CD8-positive, alpha-beta memory T cell (primary cell): ENCODE measurements at regions of chr15 and their contacts with region 1.

Region 1: DNA sequence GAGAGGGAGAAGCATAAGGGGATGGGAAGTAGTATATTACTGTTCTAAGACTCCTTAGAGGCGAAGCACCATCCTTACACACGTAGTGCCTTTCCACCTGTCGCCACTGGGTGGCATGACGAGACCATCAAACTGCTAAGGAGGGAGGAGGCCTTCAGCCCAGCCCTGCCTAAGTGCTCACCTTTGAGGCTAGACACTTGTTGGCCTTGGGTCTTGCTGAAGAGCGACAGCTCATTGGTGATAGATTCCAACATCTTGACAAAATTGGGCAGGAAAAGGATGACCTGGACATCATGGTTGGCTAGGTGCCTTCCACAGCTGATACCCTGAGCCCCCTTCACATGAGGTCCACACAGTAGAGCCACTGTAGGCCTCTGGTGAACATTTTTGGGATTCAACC is 19.6 kb downstream of the CLK3 start:
- DNase-seq: peak; percentile 48 to 81 (median 56)
- H3K4me3 ChIP-seq: no peak overlapping the region
- H3K4me3 Mint-ChIP-seq: no peak overlapping the region
- H3K27ac ChIP-seq: no peak overlapping the region
- H3K27ac Mint-ChIP-seq: peak overlapping the region in 6 of 8 donors; percentile 4 to 77 (median 50)
- H3K4me1 ChIP-seq: no peaks in the 10 kb centered on the region
- H3K4me1 Mint-ChIP-seq: peaks cover 0 to 2% (median 2%) of the 10 kb centered on the region in 3 donors
- H3K27me3 ChIP-seq: no peaks in the 10 kb centered on the region
- H3K27me3 Mint-ChIP-seq: no peaks in the 10 kb centered on the region

Region 2: DNA sequence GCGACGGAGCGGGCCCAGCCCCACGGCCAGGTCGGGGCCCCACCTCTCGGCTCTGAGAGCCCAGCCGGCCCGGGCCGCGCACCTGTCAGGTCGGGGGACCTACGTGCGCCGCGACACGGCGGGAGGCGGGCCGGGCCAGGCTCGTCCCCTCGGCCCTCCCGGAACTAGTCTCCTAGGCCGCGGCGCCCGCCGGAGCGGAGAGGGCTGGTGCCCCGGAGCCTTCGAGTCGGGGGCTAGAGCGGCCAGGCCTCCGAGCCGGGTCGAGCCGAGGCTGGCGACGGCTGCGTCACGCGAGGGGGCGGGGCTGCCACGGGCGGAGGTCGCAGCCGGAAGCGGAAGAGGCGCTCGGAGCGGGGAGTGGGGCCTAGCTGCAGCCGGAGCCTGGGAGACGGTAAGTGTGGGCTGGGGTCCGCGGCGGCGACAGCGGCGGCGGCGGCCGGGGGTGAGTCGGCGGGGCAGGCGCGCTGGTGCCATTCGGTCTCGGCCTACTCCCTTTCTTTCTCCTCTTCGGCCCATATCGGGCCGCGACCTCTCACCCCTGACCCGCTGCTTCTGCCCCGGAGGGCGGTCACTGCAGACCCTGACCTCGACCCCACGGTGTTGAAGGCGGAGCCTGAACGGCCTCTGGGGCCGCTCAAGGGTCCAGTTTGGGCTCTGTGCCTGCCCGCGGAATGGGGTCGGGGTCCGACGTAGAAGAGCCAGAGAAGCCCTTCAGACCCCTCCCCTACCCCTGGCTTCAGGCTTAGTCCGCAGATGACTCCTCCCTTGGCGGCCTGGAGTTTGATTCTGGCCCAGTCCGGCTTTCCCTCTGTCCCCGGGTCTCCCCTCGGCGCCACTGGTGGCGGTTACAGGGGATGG is 19.5 kb before region 1 on chr15 and contains the start of gene CLK3:
- CTCF ChIA-PET with region 1: interaction called, 35 read pairs
- POLR2A ChIA-PET with region 1: interaction called, 3 read pairs
- DNase-seq: peak; percentile 91 to 96 (median 95)
- H3K4me3 ChIP-seq: peak within 1 kb of the TSS; percentile 95
- H3K4me3 Mint-ChIP-seq: peak within 1 kb of the TSS; percentile 93 to 98 (median 94)
- H3K27ac ChIP-seq: peak within 1 kb of the TSS; percentile 97
- H3K27ac Mint-ChIP-seq: peak within 1 kb of the TSS; percentile 97 to 99 (median 98)
- H3K4me1 ChIP-seq: peaks cover 35% of the 10 kb centered on the region
- H3K4me1 Mint-ChIP-seq: peaks cover 38 to 53% (median 41%) of the 10 kb centered on the region in 3 donors
- H3K27me3 ChIP-seq: no peaks in the 10 kb centered on the region
- H3K27me3 Mint-ChIP-seq: no peaks in the 10 kb centered on the region
- total RNA-seq, gene CLK3: 96.8 to 101 TPM

Region 3: GRCh38 chr15:74620636-74621545 is 14.3 kb before region 1 on chr15:
- CTCF ChIA-PET with region 1: interaction called, 35 read pairs
- POLR2A ChIA-PET with region 1: interaction called, 3 read pairs
- DNase-seq: peak; percentile 55 to 79 (median 64)
- H3K4me3 ChIP-seq: no peak overlapping the region
- H3K4me3 Mint-ChIP-seq: peak overlapping the region in 3 of 7 donors; percentile 13 to 70 (median 43)
- H3K27ac ChIP-seq: no peak overlapping the region
- H3K27ac Mint-ChIP-seq: peak overlapping the region; percentile 2 to 94 (median 84)
- H3K4me1 ChIP-seq: peaks cover 38% of the 10 kb centered on the region
- H3K4me1 Mint-ChIP-seq: peaks cover 52 to 63% (median 54%) of the 10 kb centered on the region in 3 donors
- H3K27me3 ChIP-seq: no peaks in the 10 kb centered on the region
- H3K27me3 Mint-ChIP-seq: peaks cover 0 to 3% of the 10 kb centered on the region in 2 donors

Region 4: DNA sequence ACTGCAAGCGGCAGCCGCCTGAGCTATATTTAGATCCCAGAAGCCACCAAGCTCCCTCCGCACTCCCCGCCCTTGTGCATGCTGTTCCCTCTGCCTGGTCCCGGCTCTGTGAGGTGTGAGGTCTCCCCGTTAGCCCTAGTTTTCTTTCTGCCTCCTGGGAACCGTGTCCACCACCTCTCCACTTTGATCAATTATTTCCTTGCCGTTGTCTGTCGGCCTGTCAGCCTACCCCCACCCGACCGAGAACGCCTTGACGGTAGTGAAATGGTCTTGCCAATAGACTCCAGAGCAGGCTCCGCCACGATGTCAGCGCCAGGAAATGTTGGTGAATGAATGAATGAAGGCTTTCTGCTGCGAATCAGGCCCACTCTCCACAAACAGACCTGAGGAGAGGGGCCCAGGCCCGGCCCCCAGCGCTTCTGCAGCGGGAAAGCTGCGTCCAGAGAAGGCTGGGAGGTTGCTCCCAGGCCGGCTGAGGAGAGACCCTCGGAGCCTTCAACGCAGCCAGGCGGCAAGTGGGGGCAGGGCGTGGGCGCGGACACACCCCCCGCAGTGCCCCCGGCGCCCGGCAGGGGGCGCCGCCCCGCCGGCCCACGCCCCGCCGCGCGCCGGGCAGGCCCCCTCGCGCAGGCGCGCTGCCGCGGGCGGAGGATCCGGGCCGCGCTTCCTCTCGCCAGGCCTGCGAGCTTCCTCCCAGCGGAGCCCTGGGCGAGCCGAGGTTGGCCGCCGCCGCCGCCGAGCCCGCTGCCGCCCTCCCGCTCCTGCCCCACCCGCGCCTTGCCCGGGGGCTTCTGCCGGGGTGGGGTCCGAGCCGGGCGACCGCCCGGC is 146.4 kb after region 1 on chr15 and contains the start of gene CSK:
- CTCF ChIA-PET with region 1: interaction called, 19 read pairs
- POLR2A ChIA-PET with region 1: no interaction called
- DNase-seq: peak; percentile 76 to 87 (median 83)
- H3K4me3 ChIP-seq: peak within 1 kb of the TSS; percentile 99
- H3K4me3 Mint-ChIP-seq: peak within 1 kb of the TSS; percentile 85 to 98 (median 95)
- H3K27ac ChIP-seq: peak within 1 kb of the TSS; percentile 74
- H3K27ac Mint-ChIP-seq: peak within 1 kb of the TSS; percentile 93 to 100 (median 98)
- H3K4me1 ChIP-seq: peaks cover 66% of the 10 kb centered on the region
- H3K4me1 Mint-ChIP-seq: peaks cover 71 to 81% (median 76%) of the 10 kb centered on the region in 3 donors
- H3K27me3 ChIP-seq: no peaks in the 10 kb centered on the region
- H3K27me3 Mint-ChIP-seq: peaks cover 0 to 5% of the 10 kb centered on the region in 2 donors
- total RNA-seq, gene CSK: 288 to 294 TPM

Region 5: GRCh38 chr15:74793135-74794028 is 158.2 kb after region 1 on chr15:
- CTCF ChIA-PET with region 1: interaction called, 13 read pairs
- POLR2A ChIA-PET with region 1: no interaction called
- DNase-seq: peak; percentile 71 to 85 (median 74)
- H3K4me3 ChIP-seq: peak overlapping the region; percentile 46
- H3K4me3 Mint-ChIP-seq: peak overlapping the region; percentile 66 to 91 (median 85)
- H3K27ac ChIP-seq: no peak overlapping the region
- H3K27ac Mint-ChIP-seq: peak overlapping the region; percentile 81 to 98 (median 93)
- H3K4me1 ChIP-seq: peaks cover 99% of the 10 kb centered on the region
- H3K4me1 Mint-ChIP-seq: peaks cover 84 to 93% (median 89%) of the 10 kb centered on the region in 3 donors
- H3K27me3 ChIP-seq: no peaks in the 10 kb centered on the region
- H3K27me3 Mint-ChIP-seq: no peaks in the 10 kb centered on the region

Region 6: DNA sequence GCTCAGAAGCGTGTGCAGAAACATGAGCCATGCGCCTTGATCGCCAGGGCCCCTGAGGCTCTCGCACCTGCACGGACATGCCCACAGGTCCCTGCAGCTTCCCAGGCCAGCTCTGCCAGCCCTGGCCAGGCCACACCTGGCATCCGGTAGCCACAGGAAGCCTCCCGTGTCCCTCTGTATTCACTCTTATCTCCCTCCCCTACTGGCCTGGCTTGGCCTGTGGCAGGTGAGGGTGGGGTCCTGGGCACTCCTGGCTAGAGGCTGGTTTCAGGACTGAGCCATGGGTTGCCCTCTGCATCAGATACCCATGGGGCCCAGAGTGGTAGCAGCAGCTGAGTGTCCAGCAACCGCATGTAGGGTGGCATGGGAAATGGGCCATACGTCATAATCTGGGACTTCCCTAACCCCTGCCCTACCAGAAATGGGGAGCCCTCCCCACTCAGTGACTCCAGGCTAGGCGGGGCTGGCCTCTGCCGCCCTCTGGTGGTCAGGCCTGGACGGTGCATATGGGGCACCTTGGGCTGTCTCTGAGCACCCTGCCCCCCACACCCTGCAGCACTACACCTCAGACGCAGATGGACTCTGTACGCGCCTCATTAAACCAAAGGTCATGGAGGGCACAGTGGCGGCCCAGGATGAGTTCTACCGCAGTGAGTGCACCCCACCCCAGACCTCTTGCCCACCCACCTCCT is 164.8 kb after region 1 on chr15:
- CTCF ChIA-PET with region 1: interaction called, 11 read pairs
- POLR2A ChIA-PET with region 1: no interaction called
- DNase-seq: peak; percentile 81 to 91 (median 85)
- H3K4me3 ChIP-seq: peak overlapping the region; percentile 32
- H3K4me3 Mint-ChIP-seq: peak overlapping the region in 6 of 7 donors; percentile 19 to 40 (median 26)
- H3K27ac ChIP-seq: peak overlapping the region; percentile 65
- H3K27ac Mint-ChIP-seq: peak overlapping the region; percentile 79 to 97 (median 94)
- H3K4me1 ChIP-seq: peaks cover 57% of the 10 kb centered on the region
- H3K4me1 Mint-ChIP-seq: peaks cover 42 to 53% (median 48%) of the 10 kb centered on the region in 3 donors
- H3K27me3 ChIP-seq: no peaks in the 10 kb centered on the region
- H3K27me3 Mint-ChIP-seq: no peaks in the 10 kb centered on the region

Region 7: DNA sequence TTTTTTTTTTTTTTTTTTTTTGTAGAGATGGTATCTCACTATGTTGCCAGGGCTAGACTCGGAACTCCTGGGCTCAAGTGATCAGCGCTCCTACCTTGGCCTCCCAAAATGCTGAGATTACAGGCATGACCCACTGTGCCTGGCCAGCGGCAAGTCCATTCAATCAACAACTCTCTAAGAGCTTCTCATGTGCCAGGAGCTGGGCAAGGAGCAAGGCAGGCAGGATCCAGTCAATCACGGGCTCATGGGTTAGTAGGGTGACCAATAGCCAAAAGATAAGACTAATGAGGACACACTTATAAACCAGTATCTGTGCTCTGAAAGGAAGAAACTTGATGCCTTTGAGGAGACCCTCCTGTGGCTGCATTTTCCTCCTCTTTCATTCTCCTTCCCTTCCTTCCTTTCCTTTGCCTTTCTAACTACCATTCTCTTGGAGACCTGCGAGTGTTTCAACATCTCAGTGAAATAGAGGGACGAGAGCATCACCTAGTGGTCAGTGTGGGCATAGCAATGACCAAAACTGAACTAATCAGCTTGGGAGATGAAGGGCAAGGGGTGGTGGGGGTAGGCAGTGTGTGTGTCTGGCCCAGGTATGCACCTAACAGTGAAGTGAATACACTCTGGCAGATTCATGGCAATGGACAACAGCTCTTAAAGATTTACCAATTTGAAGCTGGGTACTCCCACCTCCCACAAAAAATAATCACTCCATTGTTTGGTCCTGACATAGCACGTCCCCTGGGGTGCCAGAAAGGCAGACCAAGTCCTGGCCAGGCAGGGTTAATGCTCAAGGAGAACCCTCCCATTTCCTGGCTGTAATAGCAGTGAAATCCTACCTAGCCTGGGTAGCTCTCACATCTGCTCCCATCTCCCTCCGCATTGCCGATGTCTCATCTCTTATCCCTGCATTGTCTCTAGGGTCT is 315.1 kb after region 1 on chr15:
- CTCF ChIA-PET with region 1: interaction called, 28 read pairs
- POLR2A ChIA-PET with region 1: no interaction called
- DNase-seq: peak; percentile 64 to 82 (median 69)
- H3K4me3 ChIP-seq: no peak overlapping the region
- H3K4me3 Mint-ChIP-seq: peak overlapping the region in 1 of 7 donors; percentile 1
- H3K27ac ChIP-seq: no peak overlapping the region
- H3K27ac Mint-ChIP-seq: no peak overlapping the region
- H3K4me1 ChIP-seq: peaks cover 3% of the 10 kb centered on the region
- H3K4me1 Mint-ChIP-seq: peaks cover 0 to under 1% (median 0%) of the 10 kb centered on the region in 3 donors
- H3K27me3 ChIP-seq: no peaks in the 10 kb centered on the region
- H3K27me3 Mint-ChIP-seq: peaks cover 0 to 3% of the 10 kb centered on the region in 2 donors